ENCODE measurements at regions of chr5 and their contacts with region 1.

Region 1: GRCh38 chr5:125412561-125413495 is 666.4 kb upstream of the ZNF608 start:
- DNase-seq: peak; percentile 87
- H3K4me3 Mint-ChIP-seq: peak overlapping the region; percentile 50
- H3K27ac Mint-ChIP-seq: peak overlapping the region; percentile 96
- H3K4me1 Mint-ChIP-seq: peaks cover 53% of the 10 kb centered on the region
- H3K27me3 Mint-ChIP-seq: no peaks in the 10 kb centered on the region
- CTCF ChIP-seq: no peak

Region 2: DNA sequence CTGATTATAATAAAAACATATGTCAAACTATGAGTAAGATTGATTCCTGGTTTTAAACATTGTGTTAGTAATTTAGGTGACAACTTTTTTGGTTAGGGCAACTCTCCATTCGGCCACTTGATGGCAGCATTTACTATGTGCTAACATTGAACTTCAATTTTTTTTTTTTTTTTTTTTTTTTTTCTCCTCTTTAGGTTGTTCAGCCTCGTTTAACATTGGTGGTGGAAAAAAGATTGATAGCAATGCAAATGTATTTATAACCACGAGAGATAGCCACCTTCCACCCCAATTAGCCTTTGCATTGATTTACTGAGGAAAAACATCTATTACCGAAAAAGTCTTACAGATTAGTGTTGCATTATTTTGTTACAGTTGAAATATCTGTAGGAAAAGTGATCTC is 1741.8 kb before region 1 on chr5:
- CTCF ChIA-PET with region 1: interaction called, 3 read pairs
- intact Hi-C with region 1: loop called (anchors 10 kb)
- DNase-seq: peak; percentile 47
- H3K4me3 Mint-ChIP-seq: no peak overlapping the region
- H3K27ac Mint-ChIP-seq: no peak overlapping the region
- H3K4me1 Mint-ChIP-seq: no peaks in the 10 kb centered on the region
- H3K27me3 Mint-ChIP-seq: no peaks in the 10 kb centered on the region
- CTCF ChIP-seq: peak; percentile 77

Region 3: GRCh38 chr5:124741711-124742496 is 670.9 kb before region 1 on chr5:
- CTCF ChIA-PET with region 1: interaction called, 4 read pairs
- intact Hi-C with region 1: loop called (anchors 2 kb)
- DNase-seq: peak; percentile 65
- H3K4me3 Mint-ChIP-seq: no peak overlapping the region
- H3K27ac Mint-ChIP-seq: no peak overlapping the region
- H3K4me1 Mint-ChIP-seq: peaks cover 27% of the 10 kb centered on the region
- H3K27me3 Mint-ChIP-seq: no peaks in the 10 kb centered on the region
- CTCF ChIP-seq: no peak

Region 4: DNA sequence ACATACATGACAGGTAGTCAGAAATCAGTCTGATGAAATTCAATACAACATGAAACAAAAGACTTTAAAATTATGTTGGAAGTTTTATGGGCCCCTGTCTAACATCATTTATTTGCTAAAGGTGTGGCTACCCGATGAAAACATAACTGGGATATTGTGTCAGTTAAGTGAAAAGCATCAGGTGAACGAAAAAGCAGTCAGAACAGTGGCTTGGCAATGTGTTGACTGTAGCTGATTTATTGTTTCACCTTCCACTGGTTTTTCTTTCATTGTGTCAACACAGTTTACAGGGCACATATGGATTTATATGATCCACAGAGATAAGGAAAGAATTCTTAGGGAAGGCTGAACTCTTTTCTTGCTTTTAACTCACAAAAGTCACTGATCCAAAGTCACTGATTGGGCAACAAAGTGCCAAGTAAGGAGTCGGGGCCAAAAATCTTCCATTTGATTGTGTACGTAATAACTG is 236.8 kb before region 1 on chr5:
- CTCF ChIA-PET with region 1: no interaction called
- intact Hi-C with region 1: loop called (anchors 1 kb)
- DNase-seq: peak; percentile 21
- H3K4me3 Mint-ChIP-seq: no peak overlapping the region
- H3K27ac Mint-ChIP-seq: peak overlapping the region; percentile 87
- H3K4me1 Mint-ChIP-seq: peaks cover 15% of the 10 kb centered on the region
- H3K27me3 Mint-ChIP-seq: no peaks in the 10 kb centered on the region
- CTCF ChIP-seq: no peak

Region 5: GRCh38 chr5:125463466-125464092 is 50.8 kb after region 1 on chr5:
- CTCF ChIA-PET with region 1: no interaction called
- intact Hi-C with region 1: no loop called
- DNase-seq: no peak
- H3K4me3 Mint-ChIP-seq: no peak overlapping the region
- H3K27ac Mint-ChIP-seq: no peak overlapping the region
- H3K4me1 Mint-ChIP-seq: no peaks in the 10 kb centered on the region
- H3K27me3 Mint-ChIP-seq: no peaks in the 10 kb centered on the region
- CTCF ChIP-seq: no peak

Region 6: DNA sequence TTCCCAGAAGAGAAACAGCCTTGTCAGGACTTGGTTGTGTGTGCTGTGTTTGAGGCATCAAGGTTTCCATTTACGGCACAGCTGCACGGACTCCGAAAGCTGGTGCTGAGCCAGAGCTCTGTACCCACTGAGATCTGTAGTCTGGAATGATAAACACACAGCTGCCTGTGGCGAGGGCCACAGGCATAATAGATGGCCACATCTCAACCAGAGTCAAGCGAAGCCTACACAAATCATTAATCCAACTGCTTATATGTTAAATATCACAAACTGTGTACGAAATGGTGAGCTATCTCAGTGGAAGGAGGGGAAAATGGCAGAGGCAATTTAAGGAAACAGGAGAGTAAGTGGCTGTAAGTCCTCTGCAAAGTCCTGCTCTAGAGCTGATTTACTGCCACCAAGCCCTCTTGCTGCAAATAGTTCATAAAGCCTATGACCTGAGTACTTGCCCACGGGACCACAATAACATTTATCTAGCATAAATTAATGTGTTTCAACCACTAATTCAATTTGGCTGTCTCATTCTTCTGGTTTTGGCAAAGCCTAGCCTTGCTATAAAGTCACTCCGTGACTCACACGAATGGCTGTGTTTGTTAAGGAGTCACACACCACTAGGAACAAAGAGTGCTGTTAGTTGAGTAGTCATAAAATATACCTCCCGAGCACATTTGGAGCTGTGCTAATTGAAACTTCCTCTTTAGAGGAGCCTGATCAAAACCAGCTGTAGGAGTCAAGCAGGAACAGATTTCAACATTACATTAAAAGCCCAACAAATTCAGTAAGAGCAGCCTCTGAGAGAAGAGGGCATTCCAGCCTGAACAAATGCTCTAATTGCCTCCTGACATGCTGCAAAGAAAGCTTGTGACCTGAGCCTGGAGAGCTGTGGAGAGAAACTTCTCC is 72.2 kb after region 1 on chr5:
- CTCF ChIA-PET with region 1: interaction called, 7 read pairs
- intact Hi-C with region 1: loop called (anchors 2 kb)
- DNase-seq: peak; percentile 56
- H3K4me3 Mint-ChIP-seq: peak overlapping the region; percentile 71
- H3K27ac Mint-ChIP-seq: peak overlapping the region; percentile 91
- H3K4me1 Mint-ChIP-seq: peaks cover 31% of the 10 kb centered on the region
- H3K27me3 Mint-ChIP-seq: no peaks in the 10 kb centered on the region
- CTCF ChIP-seq: no peak

Region 7: DNA sequence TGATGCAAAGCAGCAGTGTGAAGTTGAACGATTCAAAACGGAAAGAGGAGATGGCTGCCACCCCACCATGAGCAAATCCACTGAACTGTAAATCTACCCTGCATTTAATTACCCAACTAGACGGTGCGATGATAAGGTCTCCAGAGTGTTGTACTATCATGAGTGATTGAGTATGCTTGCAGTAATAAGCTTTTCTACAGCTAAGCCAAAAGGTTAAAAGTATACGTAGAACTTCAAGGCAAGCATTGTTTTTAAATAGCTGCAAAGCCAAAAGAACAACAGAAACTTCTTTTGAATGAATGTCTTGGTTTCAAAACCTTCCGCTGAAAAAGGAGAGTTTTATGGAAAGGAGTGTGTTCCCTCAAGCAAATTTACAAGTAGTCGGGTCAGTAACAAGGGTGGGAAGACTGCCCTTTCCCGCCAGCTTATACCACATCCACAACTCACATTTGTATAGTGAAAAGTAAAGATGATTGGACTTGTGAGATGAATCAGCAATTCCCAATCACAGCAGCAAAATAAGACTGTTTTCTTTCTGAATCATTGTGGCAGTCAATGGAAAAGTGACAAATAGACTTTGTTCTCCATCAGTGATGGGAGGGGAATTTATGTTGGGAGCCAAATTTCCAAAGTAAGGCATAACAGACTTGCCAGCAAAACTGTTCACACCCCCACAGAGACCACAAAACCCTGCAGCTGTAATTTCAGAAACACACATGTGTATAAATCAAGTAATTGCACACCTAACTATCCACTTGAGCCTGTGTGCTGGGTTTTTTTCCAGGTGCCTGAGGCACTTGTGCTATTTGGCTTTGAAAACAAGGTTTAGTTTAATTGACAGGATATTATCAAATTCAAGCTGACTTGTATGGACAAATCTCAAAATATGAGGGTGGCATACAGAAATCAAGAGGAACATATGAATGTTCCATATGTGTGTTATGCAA is 602.7 kb after region 1 on chr5:
- CTCF ChIA-PET with region 1: no interaction called
- intact Hi-C with region 1: loop called (anchors 5 kb)
- DNase-seq: no peak
- H3K4me3 Mint-ChIP-seq: no peak overlapping the region
- H3K27ac Mint-ChIP-seq: no peak overlapping the region
- H3K4me1 Mint-ChIP-seq: peaks cover 18% of the 10 kb centered on the region
- H3K27me3 Mint-ChIP-seq: no peaks in the 10 kb centered on the region
- CTCF ChIP-seq: no peak

Measured in Calu3 (cell line).